ENCODE measurements at regions of chr2 and their contacts with region 1.

Region 1: GRCh38 chr2:38763228-38763627 is 12.1 kb upstream of the SRSF7 start:
- DNase-seq: peak; percentile 17
- H3K4me3 Mint-ChIP-seq: no peak overlapping the region
- H3K27ac Mint-ChIP-seq: no peak overlapping the region
- H3K4me1 Mint-ChIP-seq: peaks cover 9% of the 10 kb centered on the region
- H3K27me3 Mint-ChIP-seq: no peaks in the 10 kb centered on the region

Region 2: GRCh38 chr2:38690499-38691294 is 72.5 kb before region 1 on chr2:
- CTCF ChIA-PET with region 1: no interaction called
- POLR2A ChIA-PET with region 1: no interaction called
- DNase-seq: no peak
- H3K4me3 Mint-ChIP-seq: no peak overlapping the region
- H3K27ac Mint-ChIP-seq: peak overlapping the region; percentile 55
- H3K4me1 Mint-ChIP-seq: peaks cover 50% of the 10 kb centered on the region
- H3K27me3 Mint-ChIP-seq: no peaks in the 10 kb centered on the region

Region 3: GRCh38 chr2:38750891-38751595 is 12.2 kb before region 1 on chr2 and contains the start of gene SRSF7:
- CTCF ChIA-PET with region 1: interaction called, 3 read pairs
- POLR2A ChIA-PET with region 1: interaction called, 10 read pairs
- DNase-seq: peak; percentile 97
- H3K4me3 Mint-ChIP-seq: peak within 1 kb of the TSS; percentile 91
- H3K27ac Mint-ChIP-seq: peak within 1 kb of the TSS; percentile 99
- H3K4me1 Mint-ChIP-seq: peaks cover 53% of the 10 kb centered on the region
- H3K27me3 Mint-ChIP-seq: no peaks in the 10 kb centered on the region
- total RNA-seq, gene SRSF7: 225 to 272 TPM